ENCODE measurements at regions of chr17 and their contacts with region 1.

Region 1: DNA sequence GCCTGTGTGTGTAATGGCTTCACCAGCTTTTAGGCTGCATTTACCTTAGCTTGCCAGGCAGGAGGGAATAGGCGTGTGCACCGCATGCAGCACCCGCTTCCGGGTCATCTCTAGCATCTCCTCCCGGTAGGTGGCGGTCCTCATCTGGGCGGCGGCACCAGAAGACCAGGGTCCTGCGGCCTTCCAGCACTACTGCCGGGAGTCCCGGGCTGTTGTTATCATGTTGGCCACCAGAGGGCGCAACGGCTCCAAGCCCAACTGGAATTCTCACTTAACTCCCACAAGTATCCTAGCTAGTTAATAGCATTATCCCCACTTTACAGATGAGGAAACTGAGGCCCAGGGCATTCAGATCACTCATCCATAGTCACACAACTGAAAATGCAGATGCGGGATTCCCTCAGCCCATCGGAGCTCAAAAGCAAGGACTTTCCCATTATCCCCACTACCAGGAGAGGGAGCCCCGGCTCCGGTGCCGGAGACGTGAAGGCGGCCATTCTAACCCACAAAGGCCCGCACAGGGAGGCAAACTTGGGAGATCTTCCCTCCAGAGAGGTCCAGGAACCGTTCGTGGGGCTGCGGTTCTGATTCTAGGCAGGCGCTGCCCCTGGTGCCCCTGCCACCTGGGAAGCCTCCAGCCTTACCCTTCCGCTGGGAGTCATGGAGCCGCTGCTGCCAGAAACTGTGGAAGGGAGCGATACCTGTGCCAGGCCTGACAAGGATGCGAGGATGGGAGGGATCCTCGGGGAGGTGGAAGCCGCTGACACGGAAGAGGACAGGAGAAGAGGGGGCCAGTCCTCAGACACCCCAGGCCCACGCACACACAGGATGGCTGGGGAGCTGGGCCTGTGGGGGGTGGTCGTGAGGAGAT is 23.9 kb downstream of the LGALS9 start:
- DNase-seq: peak; percentile 54 to 74
- ATAC-seq: peak in 7 of 8 donors; percentile 25 to 52 (median 46)
- H3K4me3 ChIP-seq: no peak overlapping the region
- H3K27ac ChIP-seq: no peak overlapping the region
- H3K4me1 ChIP-seq: peaks cover 0 to 4% (median 0%) of the 10 kb centered on the region in 9 donors
- H3K27me3 ChIP-seq: peaks cover 0 to 6% (median 0%) of the 10 kb centered on the region in 7 donors
- CTCF ChIP-seq: peak; percentile 88 to 97 (median 92)

Region 2: GRCh38 chr17:27236717-27237315 is 418.1 kb before region 1 on chr17:
- intact Hi-C with region 1: loop called in 5 of 10 experiments (anchors 5 kb)
- DNase-seq: peak in 1 of 2 donors; percentile 80
- ATAC-seq: peak in 7 of 8 donors; percentile 61 to 79 (median 77)
- H3K4me3 ChIP-seq: no peak overlapping the region
- H3K27ac ChIP-seq: no peak overlapping the region
- H3K4me1 ChIP-seq: peaks cover 0 to 54% (median 3%) of the 10 kb centered on the region in 9 donors
- H3K27me3 ChIP-seq: no peaks in the 10 kb centered on the region
- CTCF ChIP-seq: peak; percentile 84 to 97 (median 94)

Region 3: DNA sequence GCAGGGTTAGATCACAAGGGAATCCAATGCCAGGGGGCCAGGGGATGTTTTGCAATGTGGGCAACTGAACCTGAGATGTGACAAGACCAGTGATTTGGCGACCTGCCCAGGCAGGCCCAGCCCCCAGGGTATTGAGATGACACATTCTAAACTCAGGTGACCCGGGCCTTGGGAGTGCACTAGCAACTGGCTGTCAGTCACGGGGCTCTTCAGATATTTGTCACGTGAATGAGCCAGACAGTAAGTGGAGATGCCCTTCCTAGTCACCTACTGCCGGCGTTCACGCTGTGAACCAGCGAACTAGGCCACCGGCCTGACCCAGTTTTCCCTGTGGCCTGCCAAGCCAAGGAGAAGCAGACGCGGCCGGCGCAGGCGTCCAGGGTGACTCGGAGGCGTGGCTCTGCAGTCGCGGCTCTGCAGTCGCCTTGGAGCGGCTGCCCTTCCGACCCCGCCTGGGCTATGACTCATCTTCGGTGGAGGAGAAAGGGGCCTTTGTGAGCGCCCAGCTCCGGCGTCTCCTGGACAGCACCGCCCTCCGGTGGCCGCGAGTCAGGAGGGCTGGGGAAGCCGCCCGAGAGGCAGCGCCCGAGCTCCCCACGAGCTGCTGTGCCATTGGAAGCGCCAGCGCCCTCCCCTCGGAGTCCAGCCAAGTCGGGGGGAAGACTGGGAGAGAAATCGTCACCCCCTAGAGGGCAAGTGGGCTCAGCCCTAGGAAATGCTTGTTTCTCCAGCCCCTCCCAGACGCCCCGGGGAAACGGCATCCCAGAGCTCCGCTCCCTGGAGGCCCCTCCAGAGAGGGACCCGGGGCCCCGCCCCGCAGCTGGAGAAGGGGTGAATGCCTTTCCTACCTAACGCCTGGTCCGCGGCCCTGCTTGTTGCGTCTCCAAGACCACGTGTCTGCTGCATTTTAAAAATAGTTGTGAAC is 322.1 kb before region 1 on chr17:
- intact Hi-C with region 1: no loop called
- DNase-seq: peak; percentile 99
- ATAC-seq: peak; percentile 94 to 99 (median 97)
- H3K4me3 ChIP-seq: peak overlapping the region in 9 of 10 donors; percentile 23 to 62 (median 55)
- H3K27ac ChIP-seq: peak overlapping the region; percentile 87 to 99 (median 93)
- H3K4me1 ChIP-seq: peaks cover 3 to 37% (median 24%) of the 10 kb centered on the region in 9 donors
- H3K27me3 ChIP-seq: no peaks in the 10 kb centered on the region
- CTCF ChIP-seq: peak; percentile 81 to 99 (median 94)

Region 4: GRCh38 chr17:27609611-27610303 is 45.1 kb before region 1 on chr17:
- intact Hi-C with region 1: loop called in 5 of 10 experiments (anchors 2 to 5 kb)
- DNase-seq: no peak
- ATAC-seq: peak; percentile 31 to 79 (median 72)
- H3K4me3 ChIP-seq: no peak overlapping the region
- H3K27ac ChIP-seq: no peak overlapping the region
- H3K4me1 ChIP-seq: peaks cover 0 to 7% (median 0%) of the 10 kb centered on the region in 9 donors
- H3K27me3 ChIP-seq: no peaks in the 10 kb centered on the region
- CTCF ChIP-seq: peak; percentile 37 to 74 (median 63)

Region 5: GRCh38 chr17:27747462-27748359 is 92.8 kb after region 1 on chr17:
- intact Hi-C with region 1: loop called in 2 of 10 experiments (anchors 5 kb)
- DNase-seq: no peak
- ATAC-seq: no peak
- H3K4me3 ChIP-seq: no peak overlapping the region
- H3K27ac ChIP-seq: peak overlapping the region in 1 of 10 donors; percentile 85
- H3K4me1 ChIP-seq: peaks cover 0 to 17% (median 0%) of the 10 kb centered on the region in 9 donors
- H3K27me3 ChIP-seq: no peaks in the 10 kb centered on the region
- CTCF ChIP-seq: peak in 2 of 9 donors; percentile 4 to 11

Region 6: GRCh38 chr17:27760069-27760885 is 105.4 kb after region 1 on chr17:
- intact Hi-C with region 1: loop called in 8 of 10 experiments (anchors 2 to 5 kb)
- DNase-seq: peak; percentile 58 to 75
- ATAC-seq: peak in 7 of 8 donors; percentile 39 to 69 (median 59)
- H3K4me3 ChIP-seq: no peak overlapping the region
- H3K27ac ChIP-seq: no peak overlapping the region
- H3K4me1 ChIP-seq: no peaks in the 10 kb centered on the region
- H3K27me3 ChIP-seq: no peaks in the 10 kb centered on the region
- CTCF ChIP-seq: peak; percentile 83 to 96 (median 92)

Region 7: DNA sequence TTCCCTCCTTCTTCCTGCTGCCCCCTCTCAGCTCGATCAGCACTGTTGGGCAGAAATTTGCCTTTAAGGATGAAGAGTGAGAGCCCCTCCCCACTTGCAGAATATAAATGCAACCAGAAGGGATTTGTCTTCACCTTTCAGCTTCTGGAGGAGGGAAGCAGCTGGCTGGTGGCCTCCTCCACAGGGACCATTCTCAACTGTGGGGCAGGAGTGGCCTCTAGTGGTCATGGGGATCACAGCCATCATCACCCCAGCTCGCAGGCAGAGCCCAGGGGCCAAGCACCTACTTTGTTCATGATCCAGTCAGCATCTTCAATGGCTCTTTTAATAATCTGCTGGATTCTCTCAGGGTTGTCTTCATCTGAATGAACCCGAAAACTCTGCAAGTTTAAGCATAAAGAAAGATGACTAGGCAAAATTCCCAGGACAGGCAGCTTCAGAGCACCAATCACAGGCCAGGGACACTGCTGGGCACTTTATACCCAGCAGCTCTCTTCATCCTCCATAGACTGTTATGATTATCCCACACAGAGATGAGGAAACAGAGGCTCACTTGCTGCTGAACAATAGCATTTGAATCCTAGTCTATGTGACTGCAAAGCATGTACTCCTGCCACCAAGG is 225.2 kb after region 1 on chr17:
- intact Hi-C with region 1: loop called in 5 of 10 experiments (anchors 5 to 10 kb)
- DNase-seq: peak; percentile 71 to 80
- ATAC-seq: peak; percentile 86 to 95 (median 92)
- H3K4me3 ChIP-seq: no peak overlapping the region
- H3K27ac ChIP-seq: no peak overlapping the region
- H3K4me1 ChIP-seq: peaks cover 0 to 21% (median 4%) of the 10 kb centered on the region in 9 donors
- H3K27me3 ChIP-seq: no peaks in the 10 kb centered on the region
- CTCF ChIP-seq: peak; percentile 67 to 91 (median 87)

Region 8: DNA sequence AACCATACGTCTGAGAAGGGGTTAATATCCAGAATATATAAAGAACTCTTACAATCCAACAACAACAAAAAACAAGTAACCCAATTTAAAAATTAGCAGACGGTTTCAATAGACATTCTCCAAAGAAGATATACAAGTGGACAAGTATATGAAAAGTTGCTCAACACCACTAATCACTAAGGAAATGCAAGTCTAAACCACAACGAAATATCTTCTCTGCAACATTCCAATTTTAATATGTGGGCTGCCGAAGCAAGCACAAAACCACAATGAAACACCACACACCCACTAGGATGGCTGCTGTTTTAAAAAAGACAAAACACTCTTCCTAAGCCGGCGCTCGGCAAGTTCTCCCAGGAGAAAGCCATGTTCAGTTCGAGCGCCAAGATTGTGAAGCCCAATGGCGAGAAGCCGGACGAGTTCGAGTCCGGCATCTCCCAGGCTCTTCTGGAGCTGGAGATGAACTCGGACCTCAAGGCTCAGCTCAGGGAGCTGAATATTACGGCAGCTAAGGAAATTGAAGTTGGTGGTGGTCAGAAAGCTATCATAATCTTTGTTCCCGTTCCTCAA is 812.7 kb after region 1 on chr17:
- intact Hi-C with region 1: no loop called
- DNase-seq: no peak
- ATAC-seq: no peak
- H3K4me3 ChIP-seq: no peak overlapping the region
- H3K27ac ChIP-seq: no peak overlapping the region
- H3K4me1 ChIP-seq: peaks cover 0 to 26% (median 0%) of the 10 kb centered on the region in 9 donors
- H3K27me3 ChIP-seq: peaks cover 0 to 37% (median 19%) of the 10 kb centered on the region in 7 donors
- CTCF ChIP-seq: no peak